SK-N-SH (cell line): ENCODE measurements at regions of chr7 and their contacts with region 1.

Region 1: GRCh38 chr7:99040104-99040958 is 103.6 kb downstream of the SMURF1 start:
- DNase-seq: peak; percentile 97
- H3K4me3 ChIP-seq: no peak overlapping the region; a peak in 1 of 4 replicates
- H3K27ac ChIP-seq: 0 out of 4 replicates have a peak overlapping the region, but pooled peaks of 1 of the 2 experiments have one; percentile 23
- H3K4me1 ChIP-seq: peaks cover 7 to 17% of the 10 kb centered on the region in 2 experiments; a peak in 3 of 4 replicates
- H3K27me3 ChIP-seq: no peaks in the 10 kb centered on the region
- CTCF ChIP-seq: peak; percentile 91
- EP300 ChIP-seq: no peak
- RAD21 ChIP-seq: peak; percentile 98

Region 2: DNA sequence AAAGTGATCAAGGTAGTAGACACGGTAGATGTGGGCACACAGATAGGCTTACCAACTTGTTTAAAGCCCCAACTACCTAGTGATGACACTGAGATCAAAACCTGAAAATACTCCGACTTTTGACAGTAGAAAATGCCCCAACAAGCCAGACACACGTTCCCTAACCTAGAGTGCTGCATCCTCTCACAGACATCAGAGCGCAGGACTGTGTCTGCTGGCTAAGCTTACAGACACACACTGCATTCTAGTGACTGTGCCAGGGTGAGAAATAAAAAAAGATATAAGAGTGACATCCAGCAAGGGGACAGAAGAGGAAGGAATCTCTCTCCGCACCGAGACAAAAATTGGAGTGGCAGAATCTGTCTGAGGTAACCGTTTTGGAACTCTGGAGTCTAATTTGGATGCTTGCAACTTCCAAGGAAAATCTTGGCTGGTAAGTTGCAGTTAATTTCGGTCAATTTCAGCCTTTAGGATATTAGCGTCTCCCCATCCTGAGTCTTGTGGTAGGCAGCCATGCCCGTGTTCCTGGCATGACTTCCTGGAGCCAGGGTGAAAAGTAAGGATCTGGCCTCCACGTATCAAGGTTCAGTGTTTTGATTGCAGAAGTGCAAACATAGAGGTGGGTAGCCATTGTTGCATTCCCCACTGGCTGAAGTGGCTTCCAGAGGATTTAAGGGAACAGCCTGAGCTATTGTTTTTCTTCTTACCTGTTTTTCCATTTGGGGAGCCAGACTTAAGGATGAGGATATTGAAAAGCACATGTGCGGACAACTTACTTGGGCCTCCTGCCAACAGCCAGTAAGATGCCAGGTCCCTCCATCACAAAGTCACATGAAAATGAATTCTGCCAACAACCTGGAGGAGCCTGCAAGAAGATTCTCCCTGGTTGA is 20.6 kb before region 1 on chr7:
- CTCF ChIA-PET with region 1: interaction called, 15 read pairs
- POLR2A ChIA-PET with region 1: no interaction called
- DNase-seq: no peak
- H3K4me3 ChIP-seq: no peak overlapping the region
- H3K27ac ChIP-seq: no peak overlapping the region
- H3K4me1 ChIP-seq: no peaks in the 10 kb centered on the region
- H3K27me3 ChIP-seq: no peaks in the 10 kb centered on the region
- CTCF ChIP-seq: no peak
- EP300 ChIP-seq: no peak
- RAD21 ChIP-seq: no peak

Region 3: DNA sequence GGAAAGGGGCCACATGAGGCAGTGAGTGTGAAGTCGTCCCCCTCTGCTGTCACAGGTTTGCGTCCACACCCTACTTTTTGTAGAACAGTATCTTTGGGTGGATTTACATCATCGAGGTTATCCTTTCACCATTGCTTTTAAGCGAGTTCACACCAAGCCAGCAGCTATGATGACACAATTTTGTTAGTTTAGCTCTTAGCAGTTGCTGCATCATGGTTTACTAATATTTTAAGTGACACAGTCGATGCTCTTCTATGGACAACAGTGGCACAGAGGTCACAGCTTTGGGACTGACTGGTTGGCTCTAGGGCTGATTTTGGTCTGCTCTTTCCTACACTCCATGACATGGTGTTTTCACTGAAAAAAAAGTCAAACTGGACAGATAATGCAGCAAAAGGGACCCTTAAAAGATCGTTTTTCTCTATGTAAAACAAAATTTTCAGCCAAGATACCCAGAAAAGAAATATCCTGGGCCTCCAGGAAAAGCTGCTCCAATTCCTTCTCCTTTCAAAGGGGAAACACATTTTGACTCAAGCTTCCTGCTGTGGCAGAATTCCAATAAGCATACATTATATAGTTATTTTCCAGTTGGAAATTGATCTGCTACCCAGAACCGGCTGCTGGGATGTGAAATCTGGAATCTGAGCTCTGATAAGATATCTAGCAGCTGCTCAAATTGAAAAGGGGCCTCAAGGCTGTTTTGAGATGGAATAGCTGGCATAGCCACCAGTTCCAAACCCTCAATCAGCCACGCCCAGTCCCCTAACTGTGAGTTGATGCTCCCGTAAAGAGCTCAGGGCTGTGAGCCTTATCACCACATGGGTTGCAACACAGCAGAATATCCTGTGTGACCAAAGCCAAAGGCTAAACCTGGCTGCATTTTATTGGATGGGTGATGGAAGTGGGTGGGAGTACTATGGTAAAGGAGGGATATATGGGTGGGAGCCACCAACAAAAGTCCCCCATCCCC is 10.6 kb before region 1 on chr7:
- CTCF ChIA-PET with region 1: interaction called, 23 read pairs
- POLR2A ChIA-PET with region 1: no interaction called
- DNase-seq: no peak
- H3K4me3 ChIP-seq: no peak overlapping the region; a peak in 1 of 4 replicates
- H3K27ac ChIP-seq: no peak overlapping the region
- H3K4me1 ChIP-seq: peaks cover 0 to 6% of the 10 kb centered on the region in 2 experiments; a peak in 1 of 4 replicates
- H3K27me3 ChIP-seq: no peaks in the 10 kb centered on the region
- CTCF ChIP-seq: no peak
- EP300 ChIP-seq: no peak
- RAD21 ChIP-seq: no peak

Region 4: GRCh38 chr7:99050971-99051370 is 10.6 kb after region 1 on chr7:
- CTCF ChIA-PET with region 1: interaction called, 23 read pairs
- POLR2A ChIA-PET with region 1: no interaction called
- DNase-seq: no peak
- H3K4me3 ChIP-seq: no peak overlapping the region
- H3K27ac ChIP-seq: no peak overlapping the region; a peak in 1 of 4 replicates
- H3K4me1 ChIP-seq: 0 out of 4 replicates have a peak, but pooled peaks cover 0 to 12% of the 10 kb centered on the region in 2 experiments
- H3K27me3 ChIP-seq: no peaks in the 10 kb centered on the region
- CTCF ChIP-seq: no peak
- EP300 ChIP-seq: no peak
- RAD21 ChIP-seq: no peak

Region 5: GRCh38 chr7:99296471-99296870 is 256.1 kb after region 1 on chr7:
- CTCF ChIA-PET with region 1: interaction called, 10 read pairs
- POLR2A ChIA-PET with region 1: no interaction called
- DNase-seq: no peak
- H3K4me3 ChIP-seq: no peak overlapping the region
- H3K27ac ChIP-seq: no peak overlapping the region
- H3K4me1 ChIP-seq: no peaks in the 10 kb centered on the region
- H3K27me3 ChIP-seq: no peaks in the 10 kb centered on the region
- CTCF ChIP-seq: no peak
- EP300 ChIP-seq: no peak
- RAD21 ChIP-seq: no peak

Region 6: DNA sequence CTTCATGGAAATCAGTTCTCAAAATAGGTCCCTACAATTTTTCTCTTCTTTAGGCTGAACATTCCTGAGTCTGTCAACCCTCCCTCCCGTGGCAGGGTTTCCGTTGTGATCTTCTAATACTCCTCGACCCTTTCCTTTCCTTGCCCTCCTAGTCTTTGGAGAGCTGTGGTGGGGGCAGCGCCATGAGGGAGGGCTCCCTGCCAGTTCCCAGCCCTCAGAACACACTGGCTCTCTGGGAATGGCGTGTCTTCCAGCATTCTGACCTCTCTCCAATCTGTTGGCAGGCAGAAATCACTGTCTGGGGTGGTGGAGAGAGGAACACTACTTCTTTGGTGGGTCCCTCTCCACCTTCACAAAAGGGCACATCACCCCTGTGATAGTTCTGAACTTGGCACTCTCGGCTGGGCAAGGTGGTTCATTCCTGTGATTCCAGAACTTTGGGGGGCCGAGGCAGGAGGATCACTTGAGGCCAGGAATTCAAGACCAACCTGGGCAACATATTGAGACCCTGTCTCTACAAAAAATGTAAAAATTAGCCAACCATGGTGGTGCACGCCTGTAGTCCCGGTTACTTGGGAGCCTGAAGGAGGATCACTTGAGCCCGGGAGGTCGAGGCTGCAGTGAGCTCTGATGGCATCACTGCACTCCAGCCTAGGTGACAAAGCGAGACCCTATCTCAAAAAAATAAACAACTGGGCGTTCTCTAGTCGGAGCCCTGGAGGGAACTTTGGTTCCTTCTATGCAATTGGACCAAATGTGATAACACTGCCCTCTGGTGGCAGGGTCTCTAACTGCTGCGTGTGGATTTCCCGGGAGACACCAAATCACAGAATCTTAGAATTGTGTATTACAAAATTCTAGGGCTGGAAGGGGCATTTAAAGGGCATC is 272.2 kb after region 1 on chr7:
- CTCF ChIA-PET with region 1: interaction called, 146 read pairs
- POLR2A ChIA-PET with region 1: no interaction called
- DNase-seq: peak; percentile 78
- H3K4me3 ChIP-seq: peak overlapping the region in 1 of 2 experiments; percentile 4; a peak in 1 of 4 replicates
- H3K27ac ChIP-seq: no peak overlapping the region
- H3K4me1 ChIP-seq: no peaks in the 10 kb centered on the region
- H3K27me3 ChIP-seq: no peaks in the 10 kb centered on the region
- CTCF ChIP-seq: peak; percentile 99
- EP300 ChIP-seq: no peak
- RAD21 ChIP-seq: peak; percentile 94

Region 7: DNA sequence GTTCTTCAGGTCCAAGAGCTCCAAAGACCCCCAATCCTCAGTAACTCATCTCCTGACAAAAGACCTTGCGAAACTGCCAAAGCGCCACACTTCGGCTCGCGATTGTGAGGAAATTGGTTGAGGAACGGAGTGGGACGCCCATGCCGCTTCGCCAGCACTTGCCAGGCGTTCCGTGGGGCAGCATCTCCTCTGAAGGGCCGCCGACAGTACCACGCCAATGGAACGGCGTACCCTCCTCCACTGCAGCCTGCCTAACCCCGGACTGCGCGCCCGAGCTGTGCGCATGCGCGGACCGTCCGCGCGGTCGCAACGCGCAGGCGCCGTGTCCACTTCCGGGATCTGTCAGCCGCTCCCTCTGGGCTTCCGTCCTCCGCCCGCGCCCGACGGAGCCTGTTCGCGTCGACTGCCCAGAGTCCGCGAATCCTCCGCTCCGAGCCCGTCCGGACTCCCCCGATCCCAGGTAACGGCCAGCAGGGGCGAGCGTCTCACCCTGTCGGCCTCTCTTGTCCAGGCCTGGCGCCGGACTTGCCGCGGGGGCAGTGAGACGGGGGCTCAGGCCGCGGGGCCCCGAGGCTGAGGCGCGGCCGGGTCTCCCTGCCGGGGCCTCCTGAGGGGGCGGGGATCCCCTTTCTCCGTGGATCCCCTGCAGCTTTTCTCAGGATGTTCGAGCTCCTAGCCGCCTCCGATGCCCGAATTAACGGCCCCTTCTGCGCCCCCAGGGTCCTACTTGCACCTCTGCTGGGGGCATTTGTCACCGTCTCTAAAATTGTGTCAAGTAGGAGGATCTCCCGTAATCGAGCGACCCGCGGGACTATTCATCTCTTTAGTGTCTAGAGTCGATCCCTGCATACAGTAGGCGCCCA is 285.4 kb after region 1 on chr7 and contains the start of gene ARPC1A:
- CTCF ChIA-PET with region 1: interaction called, 13 read pairs
- POLR2A ChIA-PET with region 1: no interaction called
- DNase-seq: peak; percentile 100
- H3K4me3 ChIP-seq: peak within 1 kb of the TSS; percentile 81 to 98
- H3K27ac ChIP-seq: peak within 1 kb of the TSS; percentile 58 to 87; a peak in 3 of 4 replicates
- H3K4me1 ChIP-seq: peaks cover 6 to 9% of the 10 kb centered on the region in 2 experiments; a peak in 3 of 4 replicates
- H3K27me3 ChIP-seq: no peaks in the 10 kb centered on the region
- CTCF ChIP-seq: peak; percentile 46
- EP300 ChIP-seq: peak in 1 of 2 experiments; percentile 32; a peak in 1 of 4 replicates
- RAD21 ChIP-seq: peak; percentile 9; the same call in 1 of the 2 replicates
- polyA plus RNA-seq, gene ARPC1A: 262 and 306 TPM in 2 replicates